ENCODE measurements at regions of chr11 and their contacts with region 1.

Region 1: GRCh38 chr11:94623120-94623735 is 56.1 kb downstream of the PIWIL4 start:
- DNase-seq: no peak

Region 2: GRCh38 chr11:94638902-94639373 is 15.7 kb after region 1 on chr11:
- intact Hi-C with region 1: no loop called
- DNase-seq: no peak

Region 3: GRCh38 chr11:94650756-94651155 is 27.5 kb after region 1 on chr11:
- intact Hi-C with region 1: no loop called
- DNase-seq: peak; percentile 91

Region 4: GRCh38 chr11:94661444-94661843 is 38.2 kb after region 1 on chr11:
- intact Hi-C with region 1: no loop called
- DNase-seq: no peak

Region 5: DNA sequence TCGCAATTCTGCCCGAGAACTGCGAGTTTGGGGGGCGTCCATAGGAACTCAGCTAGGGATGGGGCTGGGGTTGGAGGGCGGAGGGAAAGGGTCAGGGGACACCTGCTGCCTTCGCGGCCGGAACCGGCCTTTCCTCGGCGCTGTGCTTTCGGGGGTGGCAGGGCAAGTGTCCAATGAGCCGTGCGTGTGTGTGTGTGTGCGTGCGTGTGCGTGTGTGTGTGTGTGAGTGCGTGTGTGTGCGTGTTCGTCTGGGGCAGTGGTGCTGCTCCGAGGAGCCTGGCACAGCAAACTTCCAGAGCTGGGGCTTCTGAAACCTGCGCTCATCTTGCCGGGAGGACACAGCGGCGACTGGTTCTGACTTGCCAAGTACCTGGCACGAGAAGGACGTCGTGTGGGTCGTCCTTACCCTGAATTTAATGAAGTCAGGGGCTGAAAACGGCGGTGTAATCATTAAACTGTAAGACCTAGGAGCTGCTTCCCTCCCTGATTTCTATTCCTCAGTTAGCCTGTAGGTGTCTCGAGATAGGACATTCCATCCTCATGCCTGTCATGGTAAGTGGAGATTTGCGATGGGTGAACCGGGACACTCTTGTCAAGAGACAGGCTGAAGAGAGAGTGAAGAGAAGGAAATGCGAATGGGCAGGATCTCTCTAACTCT is 117.9 kb after region 1 on chr11:
- intact Hi-C with region 1: loop called in 1 of 2 experiments (anchors 10 kb)
- DNase-seq: peak; percentile 80

Region 6: GRCh38 chr11:94776351-94777321 is 153.4 kb after region 1 on chr11:
- intact Hi-C with region 1: no loop called
- DNase-seq: peak; percentile 78

Region 7: DNA sequence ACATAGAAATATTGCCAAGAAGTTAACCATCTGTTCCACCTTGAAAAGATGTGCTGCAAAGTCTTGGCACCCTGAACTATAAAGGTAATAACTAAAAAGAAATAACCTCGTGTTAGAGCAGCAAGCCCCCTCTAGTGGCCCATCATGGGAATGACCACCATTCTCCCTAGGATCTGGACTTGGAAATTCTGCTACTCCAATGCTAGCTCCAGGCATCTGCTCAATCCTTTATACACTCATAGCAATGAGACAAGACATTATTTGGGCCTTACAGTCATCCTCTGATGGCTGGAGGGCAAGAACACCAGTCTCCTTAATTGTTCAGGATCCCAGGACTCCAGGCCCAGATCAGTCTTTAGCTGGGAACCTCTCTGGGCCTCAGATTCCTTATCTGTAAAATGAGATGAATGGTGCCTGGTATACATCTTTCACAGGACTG is 274.1 kb after region 1 on chr11:
- intact Hi-C with region 1: loop called in 1 of 2 experiments (anchors 10 kb)
- DNase-seq: no peak

Region 8: GRCh38 chr11:94968334-94968958 is 345.2 kb after region 1 on chr11:
- intact Hi-C with region 1: loop called in 1 of 2 experiments (anchors 10 kb)
- DNase-seq: no peak

Measured in posterior vena cava (tissue), 2 donors.